ENCODE measurements at regions of chr16 and their contacts with region 1.

Region 1: GRCh38 chr16:69112285-69113129 is 7.1 kb downstream of the HAS3 start:
- DNase-seq: peak; percentile 38 to 86
- H3K4me3 ChIP-seq: no peak overlapping the region
- H3K4me1 ChIP-seq: no peaks in the 10 kb centered on the region
- H3K27me3 ChIP-seq: no peaks in the 10 kb centered on the region

Region 2: GRCh38 chr16:68528686-68529379 is 583.7 kb before region 1 on chr16:
- in situ Hi-C with region 1: loop called (anchors 10 kb)
- DNase-seq: peak; percentile 75 to 90
- H3K4me3 ChIP-seq: no peak overlapping the region
- H3K4me1 ChIP-seq: peaks cover 9% of the 10 kb centered on the region; the same call in 1 of the 2 replicates
- H3K27me3 ChIP-seq: no peaks in the 10 kb centered on the region

Region 3: DNA sequence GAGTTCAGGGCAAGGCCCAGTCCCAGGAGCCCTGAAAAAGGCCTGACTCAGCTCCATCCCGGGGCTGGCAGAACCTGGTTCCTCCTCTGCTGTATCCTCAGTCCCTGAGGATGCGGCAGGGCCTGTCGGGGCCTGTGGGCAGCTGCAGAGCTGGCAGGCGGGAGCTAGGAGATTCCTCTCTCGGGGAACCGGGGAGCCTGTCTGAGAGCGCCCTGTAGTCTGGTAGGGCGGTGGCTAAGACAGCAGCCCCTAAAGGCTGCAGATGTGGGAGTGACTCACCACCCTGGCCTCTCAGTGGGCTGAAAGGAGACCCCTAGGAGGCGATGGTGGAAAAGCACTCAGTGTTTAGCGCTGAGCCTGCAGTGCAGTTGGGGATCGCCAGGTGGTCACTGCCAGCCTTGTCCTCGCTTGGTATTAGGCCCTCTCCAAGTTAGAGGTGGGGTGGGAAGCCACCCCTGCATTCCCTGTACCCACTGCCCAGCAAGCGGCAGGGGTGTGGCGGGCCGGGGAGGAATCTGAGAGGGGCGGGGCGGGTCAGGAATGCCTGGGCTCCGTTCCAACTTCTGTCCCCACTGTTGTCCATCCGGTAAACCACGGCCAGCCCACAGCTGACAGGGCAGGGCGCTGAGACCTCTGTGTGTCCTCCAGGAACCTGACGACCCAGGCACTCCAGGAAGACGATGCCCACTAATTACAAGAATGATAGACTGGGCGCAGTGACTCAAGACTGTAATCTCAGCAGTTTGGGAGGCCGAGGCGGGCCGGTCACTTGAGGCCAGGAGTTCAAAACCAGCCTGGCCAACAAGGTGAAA is 405.0 kb before region 1 on chr16:
- in situ Hi-C with region 1: loop called (anchors 5 kb)
- DNase-seq: peak in 1 of 2 experiments; percentile 67
- H3K4me3 ChIP-seq: no peak overlapping the region
- H3K4me1 ChIP-seq: no peaks in the 10 kb centered on the region
- H3K27me3 ChIP-seq: no peaks in the 10 kb centered on the region

Region 4: DNA sequence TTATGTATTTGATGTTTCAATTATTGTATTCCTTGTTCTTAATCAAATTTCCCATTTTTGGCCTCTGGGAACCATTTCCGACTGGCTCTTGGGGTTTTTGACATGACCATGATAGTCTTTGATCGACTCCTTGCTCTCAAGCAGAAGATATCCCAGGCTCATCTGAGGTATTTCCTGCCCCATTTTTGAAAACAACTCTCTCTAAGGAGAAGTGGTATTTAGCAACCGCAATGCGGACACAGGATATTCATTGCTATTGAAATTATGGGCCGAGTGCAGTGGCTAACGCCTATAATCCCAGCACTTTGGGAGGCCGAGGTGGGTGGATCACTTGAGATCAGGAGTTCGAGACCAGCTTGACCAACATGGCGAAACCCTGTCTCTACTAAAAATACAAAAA is 263.7 kb before region 1 on chr16:
- in situ Hi-C with region 1: loop called (anchors 5 kb)
- DNase-seq: no peak
- H3K4me3 ChIP-seq: no peak overlapping the region
- H3K4me1 ChIP-seq: peaks cover 10% of the 10 kb centered on the region
- H3K27me3 ChIP-seq: no peaks in the 10 kb centered on the region

Region 5: GRCh38 chr16:68902008-68902968 is 210.2 kb before region 1 on chr16:
- in situ Hi-C with region 1: loop called (anchors 5 kb)
- DNase-seq: peak; percentile 42 to 67
- H3K4me3 ChIP-seq: no peak overlapping the region
- H3K4me1 ChIP-seq: peaks cover 3% of the 10 kb centered on the region
- H3K27me3 ChIP-seq: no peaks in the 10 kb centered on the region

Region 6: DNA sequence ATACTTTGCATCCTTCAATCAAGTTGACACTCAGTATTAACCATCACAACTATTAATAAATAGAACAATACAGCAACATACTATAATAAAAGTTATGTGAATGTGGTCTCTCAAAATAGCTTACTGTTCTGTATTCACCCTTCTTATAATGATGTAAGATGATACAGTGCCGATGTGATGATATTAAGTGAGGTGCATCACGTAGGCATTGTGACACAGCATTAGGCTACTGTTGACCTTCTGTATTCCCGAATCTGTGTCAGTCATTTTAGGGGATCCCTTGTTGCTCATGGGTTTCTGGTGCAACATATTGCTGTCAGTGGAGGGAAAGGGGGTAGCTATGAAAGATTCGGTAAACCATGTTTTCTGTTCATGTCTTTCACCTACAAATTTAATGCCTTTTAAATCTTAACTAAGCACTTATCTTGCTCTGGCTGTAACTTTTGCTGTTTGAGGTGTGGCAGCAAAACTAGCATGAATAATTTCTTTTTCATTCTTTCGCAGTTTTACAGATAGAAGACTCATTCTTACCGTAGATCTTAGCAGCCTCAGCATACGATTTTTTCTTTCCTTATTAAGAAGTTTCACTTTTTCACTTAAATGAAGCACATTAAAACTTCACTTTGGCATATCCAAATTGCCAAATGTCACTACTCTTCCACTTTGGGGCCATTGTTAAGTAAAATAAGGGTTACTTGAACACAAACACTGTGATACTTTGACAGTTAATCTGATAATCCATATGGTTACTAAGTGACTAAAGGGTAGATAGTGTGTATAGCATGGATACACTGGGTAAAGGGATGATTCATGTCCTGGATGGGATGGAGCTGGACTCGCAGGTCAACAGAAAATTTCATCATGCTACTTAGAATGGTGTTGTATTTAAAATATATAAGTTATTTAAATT is 482.9 kb after region 1 on chr16:
- in situ Hi-C with region 1: no loop called
- DNase-seq: peak in 1 of 2 experiments; percentile 2
- H3K4me3 ChIP-seq: no peak overlapping the region
- H3K4me1 ChIP-seq: peaks cover 6% of the 10 kb centered on the region
- H3K27me3 ChIP-seq: no peaks in the 10 kb centered on the region